Sciatic nerve (tissue), 2 donors: ENCODE measurements at regions of chr13 and their contacts with region 1.

Region 1: GRCh38 chr13:76473552-76474134 is 412.6 kb downstream of the KCTD12 start:
- DNase-seq: peak; percentile 84
- ATAC-seq: peak; percentile 96

Region 2: GRCh38 chr13:75870397-75870903 is 603.2 kb before region 1 on chr13:
- intact Hi-C with region 1: loop called (anchors 5 kb)
- DNase-seq: no peak
- ATAC-seq: peak; percentile 72

Region 3: DNA sequence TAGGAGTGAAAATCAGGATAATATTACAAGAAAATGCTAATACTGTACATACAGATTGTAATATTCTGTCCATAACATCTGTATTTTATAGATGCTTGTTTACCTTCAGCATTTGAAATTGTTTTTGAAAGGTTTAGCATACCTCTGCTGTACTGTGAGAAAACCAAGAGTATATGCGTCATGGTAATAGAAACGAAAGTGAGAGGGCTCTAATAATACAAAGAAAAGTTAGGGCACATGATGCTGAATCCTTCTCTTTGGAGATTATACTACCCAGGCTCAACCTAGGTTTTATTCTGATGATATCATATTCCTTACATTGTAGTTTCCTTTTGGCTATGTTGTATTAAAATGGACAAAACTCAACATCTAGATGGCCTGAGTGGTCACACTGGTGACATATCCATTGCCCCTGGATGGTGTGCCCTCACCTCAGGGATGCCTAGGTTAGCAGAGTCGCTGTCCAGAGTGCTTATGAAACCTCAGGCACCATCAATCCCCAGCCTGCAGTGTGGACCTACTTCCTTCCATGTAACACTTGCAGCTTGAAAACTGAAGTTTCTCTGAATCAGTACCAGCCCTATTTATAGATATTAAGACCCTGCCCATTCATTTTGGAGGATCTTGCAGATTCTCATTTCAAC is 158.9 kb after region 1 on chr13:
- intact Hi-C with region 1: no loop called
- DNase-seq: no peak
- ATAC-seq: no peak

Region 4: GRCh38 chr13:76965759-76966421 is 492.2 kb after region 1 on chr13:
- intact Hi-C with region 1: loop called (anchors 10 kb)
- DNase-seq: peak; percentile 89
- ATAC-seq: peak; percentile 85